ENCODE measurements at regions of chr11 and their contacts with region 1.

Region 1: GRCh38 chr11:16785520-16786128 is 47.2 kb downstream of the C11orf58 start:
- DNase-seq: peak; percentile 73
- H3K4me3 ChIP-seq: no peak overlapping the region
- H3K27ac ChIP-seq: no peak overlapping the region
- H3K4me1 ChIP-seq: peaks cover 49% of the 10 kb centered on the region
- H3K27me3 ChIP-seq: no peaks in the 10 kb centered on the region
- CTCF ChIP-seq: peak; percentile 90 to 95
- POLR2A ChIP-seq: no peak

Region 2: GRCh38 chr11:16759857-16760256 is 25.8 kb before region 1 on chr11:
- CTCF ChIA-PET with region 1: interaction called, 3 read pairs
- POLR2A ChIA-PET with region 1: no interaction called
- dilution Hi-C with region 1: no loop called
- intact Hi-C with region 1: loop called (anchors 1 kb)
- DNase-seq: peak; percentile 75
- H3K4me3 ChIP-seq: no peak overlapping the region
- H3K27ac ChIP-seq: peak overlapping the region; percentile 89
- H3K4me1 ChIP-seq: peaks cover 14% of the 10 kb centered on the region
- H3K27me3 ChIP-seq: no peaks in the 10 kb centered on the region
- CTCF ChIP-seq: no peak
- POLR2A ChIP-seq: no peak

Region 3: GRCh38 chr11:16809886-16810668 is 24.5 kb after region 1 on chr11:
- CTCF ChIA-PET with region 1: interaction called, 26 read pairs
- POLR2A ChIA-PET with region 1: no interaction called
- dilution Hi-C with region 1: no loop called
- intact Hi-C with region 1: no loop called
- DNase-seq: peak; percentile 65
- H3K4me3 ChIP-seq: no peak overlapping the region
- H3K27ac ChIP-seq: no peak overlapping the region
- H3K4me1 ChIP-seq: no peaks in the 10 kb centered on the region
- H3K27me3 ChIP-seq: no peaks in the 10 kb centered on the region
- CTCF ChIP-seq: no peak
- POLR2A ChIP-seq: no peak

Region 4: GRCh38 chr11:16820324-16821092 is 34.9 kb after region 1 on chr11:
- CTCF ChIA-PET with region 1: interaction called, 64 read pairs
- POLR2A ChIA-PET with region 1: no interaction called
- dilution Hi-C with region 1: no loop called
- intact Hi-C with region 1: loop called (anchors 1 kb)
- DNase-seq: peak; percentile 74
- H3K4me3 ChIP-seq: no peak overlapping the region
- H3K27ac ChIP-seq: no peak overlapping the region
- H3K4me1 ChIP-seq: no peaks in the 10 kb centered on the region
- H3K27me3 ChIP-seq: no peaks in the 10 kb centered on the region
- CTCF ChIP-seq: peak; percentile 77 to 93
- POLR2A ChIP-seq: no peak

Region 5: GRCh38 chr11:16924826-16925560 is 139.4 kb after region 1 on chr11:
- CTCF ChIA-PET with region 1: interaction called, 3 read pairs
- POLR2A ChIA-PET with region 1: no interaction called
- dilution Hi-C with region 1: no loop called
- intact Hi-C with region 1: loop called (anchors 1 kb)
- DNase-seq: no peak
- H3K4me3 ChIP-seq: peak overlapping the region in 2 of 3 experiments; percentile 18 to 29
- H3K27ac ChIP-seq: no peak overlapping the region
- H3K4me1 ChIP-seq: peaks cover 5% of the 10 kb centered on the region
- H3K27me3 ChIP-seq: peaks cover 30 to 41% of the 10 kb centered on the region in 2 experiments
- CTCF ChIP-seq: no peak
- POLR2A ChIP-seq: no peak

Region 6: DNA sequence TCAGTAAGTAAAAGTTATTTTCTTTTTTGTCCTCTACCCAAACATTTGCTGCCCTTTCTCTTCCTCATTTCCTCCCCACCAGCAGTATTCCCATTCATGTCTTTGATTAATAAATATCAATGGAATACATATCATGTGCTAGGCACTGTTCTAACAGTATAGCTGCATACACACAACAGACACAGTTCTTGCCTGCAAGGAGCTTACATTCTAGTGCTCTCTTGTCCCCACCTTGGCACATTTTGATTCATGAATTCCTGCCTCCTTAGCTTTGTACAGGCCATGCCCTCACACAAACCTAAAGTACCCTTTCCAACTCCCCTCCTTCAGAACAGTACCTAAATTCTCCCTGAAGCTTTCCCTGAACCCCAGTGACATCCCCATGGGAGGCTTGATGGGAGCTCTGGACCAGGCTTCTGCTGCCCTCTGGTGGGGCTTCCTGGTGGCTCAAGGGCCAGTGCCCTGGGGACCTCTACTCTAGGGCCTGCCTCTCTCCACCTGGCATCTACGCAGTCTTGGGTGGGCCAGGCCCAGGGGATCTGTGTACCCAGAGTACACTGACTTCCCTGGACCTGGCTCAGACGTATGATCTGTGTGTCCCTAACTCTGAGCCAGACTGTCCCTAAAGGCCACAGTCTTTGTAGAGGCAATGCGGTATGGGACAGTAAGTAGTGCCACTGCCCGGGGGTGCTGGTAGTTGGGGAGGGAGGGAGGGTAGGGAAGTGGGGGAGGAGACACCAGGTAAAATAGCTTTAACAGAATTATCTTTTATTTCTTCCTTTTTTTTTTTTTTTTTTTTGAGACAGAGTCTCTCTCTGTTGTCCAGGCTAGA is 277.8 kb after region 1 on chr11:
- CTCF ChIA-PET with region 1: interaction called, 159 read pairs
- POLR2A ChIA-PET with region 1: no interaction called
- dilution Hi-C with region 1: no loop called
- intact Hi-C with region 1: loop called (anchors 1 kb)
- DNase-seq: peak; percentile 46
- H3K4me3 ChIP-seq: no peak overlapping the region
- H3K27ac ChIP-seq: no peak overlapping the region
- H3K4me1 ChIP-seq: no peaks in the 10 kb centered on the region
- H3K27me3 ChIP-seq: no peaks in the 10 kb centered on the region
- CTCF ChIP-seq: peak; percentile 76 to 85
- POLR2A ChIP-seq: no peak

Region 7: GRCh38 chr11:17384002-17384511 is 598.4 kb after region 1 on chr11:
- CTCF ChIA-PET with region 1: no interaction called
- POLR2A ChIA-PET with region 1: no interaction called
- dilution Hi-C with region 1: no loop called
- intact Hi-C with region 1: loop called (anchors 10 kb)
- DNase-seq: peak; percentile 66
- H3K4me3 ChIP-seq: no peak overlapping the region
- H3K27ac ChIP-seq: no peak overlapping the region
- H3K4me1 ChIP-seq: no peaks in the 10 kb centered on the region
- H3K27me3 ChIP-seq: no peaks in the 10 kb centered on the region
- CTCF ChIP-seq: peak; percentile 82 to 87
- POLR2A ChIP-seq: no peak

Measured in endothelial cell of umbilical vein (primary cell).